Activated naive CD4-positive, alpha-beta T cell treated with anti-CD3 and anti-CD28 coated beads for 36 hours (primary cell): ENCODE measurements at regions of chr13 and their contacts with region 1.

Region 1: DNA sequence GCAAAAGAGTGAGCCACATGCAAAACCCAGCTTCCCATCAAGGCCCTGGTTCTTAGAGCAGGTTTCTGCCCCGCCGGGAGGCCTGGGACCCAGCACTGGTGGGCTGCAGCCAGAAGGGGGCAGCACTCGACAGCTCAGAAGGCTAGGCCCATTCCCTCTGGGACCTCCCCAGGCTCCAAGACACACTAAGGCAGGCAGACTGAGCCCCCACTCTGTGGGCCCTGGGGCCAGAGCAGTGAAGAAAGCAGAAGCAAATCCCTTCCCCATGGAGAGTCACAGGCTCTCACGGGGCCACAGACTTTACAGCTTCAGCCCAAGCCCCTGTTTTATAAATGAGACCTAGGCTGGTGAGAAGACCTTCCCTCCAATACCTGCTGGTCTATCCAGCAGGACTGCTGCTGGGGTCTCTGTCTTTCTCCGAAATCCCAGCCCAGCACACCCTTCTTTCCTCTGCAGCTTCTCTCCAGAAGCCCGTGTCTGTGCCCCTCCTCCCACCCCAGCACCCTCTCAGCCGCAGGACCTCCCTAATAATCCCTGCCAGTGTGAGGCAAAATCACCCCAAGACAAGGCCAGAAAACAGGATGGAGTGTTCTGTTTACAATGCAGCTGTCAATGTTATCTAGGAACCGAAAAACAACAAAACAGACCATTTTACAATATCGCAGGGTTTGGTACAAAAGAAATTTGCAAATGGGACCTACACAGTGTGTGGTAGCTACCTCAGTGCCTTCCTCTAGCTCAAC is 109.3 kb downstream of the ABCC4 start:
- DNase-seq: peak; percentile 82
- H3K4me3 Mint-ChIP-seq: no peak overlapping the region
- H3K27ac Mint-ChIP-seq: no peak overlapping the region
- H3K4me1 Mint-ChIP-seq: peaks cover 5% of the 10 kb centered on the region
- H3K27me3 Mint-ChIP-seq: no peaks in the 10 kb centered on the region

Region 2: DNA sequence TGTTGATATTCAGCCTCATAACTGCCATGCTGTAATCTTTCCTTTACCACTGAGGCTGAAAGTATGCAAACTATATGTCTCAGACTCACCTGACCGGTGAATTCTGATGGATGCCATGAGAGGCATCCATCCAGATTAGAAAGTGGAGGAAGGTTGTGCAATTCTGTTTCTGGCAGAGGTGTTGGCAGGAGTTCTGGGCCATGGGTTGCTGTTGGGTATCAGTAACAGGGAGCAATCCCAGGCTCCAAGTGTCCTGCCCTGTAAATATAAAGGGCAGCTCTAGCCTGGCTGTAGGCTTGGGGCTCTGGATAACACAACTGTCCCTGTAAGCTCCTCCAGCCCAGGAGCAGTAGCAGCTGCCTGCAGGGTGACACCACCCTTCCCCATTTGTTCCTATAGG is 186.6 kb after region 1 on chr13:
- CTCF ChIA-PET with region 1: interaction called, 146 read pairs
- intact Hi-C with region 1: loop called (anchors 1 kb)
- DNase-seq: no peak
- H3K4me3 Mint-ChIP-seq: no peak overlapping the region
- H3K27ac Mint-ChIP-seq: no peak overlapping the region
- H3K4me1 Mint-ChIP-seq: peaks cover 5% of the 10 kb centered on the region
- H3K27me3 Mint-ChIP-seq: no peaks in the 10 kb centered on the region

Region 3: DNA sequence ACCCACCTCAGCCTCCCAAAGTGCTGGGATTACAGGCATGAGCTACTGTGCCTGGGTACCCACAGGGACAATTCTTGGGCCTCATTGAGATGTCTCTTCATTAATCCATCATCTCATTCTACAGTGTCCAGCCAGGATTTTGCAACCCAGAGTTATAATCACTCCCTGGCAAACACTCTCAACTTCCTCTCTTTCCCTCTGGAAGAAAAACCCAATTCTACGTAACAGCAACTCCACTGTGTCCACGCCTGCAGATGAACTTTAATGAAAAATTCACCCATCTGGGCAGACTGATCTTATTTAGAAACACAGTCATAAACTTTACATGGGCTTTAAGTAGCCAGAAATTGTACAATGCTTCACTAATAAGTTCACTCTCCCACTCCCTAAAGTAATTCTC is 199.4 kb after region 1 on chr13:
- CTCF ChIA-PET with region 1: interaction called, 14 read pairs
- intact Hi-C with region 1: no loop called
- DNase-seq: no peak
- H3K4me3 Mint-ChIP-seq: no peak overlapping the region
- H3K27ac Mint-ChIP-seq: no peak overlapping the region
- H3K4me1 Mint-ChIP-seq: no peaks in the 10 kb centered on the region
- H3K27me3 Mint-ChIP-seq: peaks cover 13% of the 10 kb centered on the region

Region 4: DNA sequence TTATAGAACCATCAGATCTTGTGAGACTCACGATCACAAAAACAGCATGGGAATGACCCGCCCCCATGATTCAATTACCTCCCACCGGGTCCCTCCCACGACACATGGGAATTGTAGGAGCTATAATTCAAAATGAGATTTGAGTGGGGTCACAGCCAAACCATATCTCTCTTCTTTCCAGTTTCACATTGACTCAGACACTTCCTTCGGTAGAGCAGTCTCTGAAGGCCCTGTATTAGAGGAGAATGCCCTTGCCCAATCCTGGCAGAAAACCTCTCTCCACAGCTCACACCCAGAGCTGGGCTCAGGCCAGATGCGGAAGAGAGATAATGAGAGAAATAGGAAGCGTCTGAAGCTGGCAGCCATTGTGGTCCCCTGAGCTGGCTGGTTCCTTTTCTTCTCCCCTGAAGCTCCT is 288.1 kb after region 1 on chr13:
- CTCF ChIA-PET with region 1: interaction called, 19 read pairs
- intact Hi-C with region 1: loop called (anchors 1 kb)
- DNase-seq: peak; percentile 27
- H3K4me3 Mint-ChIP-seq: no peak overlapping the region
- H3K27ac Mint-ChIP-seq: no peak overlapping the region
- H3K4me1 Mint-ChIP-seq: peaks cover 10% of the 10 kb centered on the region
- H3K27me3 Mint-ChIP-seq: peaks cover 3% of the 10 kb centered on the region

Region 5: DNA sequence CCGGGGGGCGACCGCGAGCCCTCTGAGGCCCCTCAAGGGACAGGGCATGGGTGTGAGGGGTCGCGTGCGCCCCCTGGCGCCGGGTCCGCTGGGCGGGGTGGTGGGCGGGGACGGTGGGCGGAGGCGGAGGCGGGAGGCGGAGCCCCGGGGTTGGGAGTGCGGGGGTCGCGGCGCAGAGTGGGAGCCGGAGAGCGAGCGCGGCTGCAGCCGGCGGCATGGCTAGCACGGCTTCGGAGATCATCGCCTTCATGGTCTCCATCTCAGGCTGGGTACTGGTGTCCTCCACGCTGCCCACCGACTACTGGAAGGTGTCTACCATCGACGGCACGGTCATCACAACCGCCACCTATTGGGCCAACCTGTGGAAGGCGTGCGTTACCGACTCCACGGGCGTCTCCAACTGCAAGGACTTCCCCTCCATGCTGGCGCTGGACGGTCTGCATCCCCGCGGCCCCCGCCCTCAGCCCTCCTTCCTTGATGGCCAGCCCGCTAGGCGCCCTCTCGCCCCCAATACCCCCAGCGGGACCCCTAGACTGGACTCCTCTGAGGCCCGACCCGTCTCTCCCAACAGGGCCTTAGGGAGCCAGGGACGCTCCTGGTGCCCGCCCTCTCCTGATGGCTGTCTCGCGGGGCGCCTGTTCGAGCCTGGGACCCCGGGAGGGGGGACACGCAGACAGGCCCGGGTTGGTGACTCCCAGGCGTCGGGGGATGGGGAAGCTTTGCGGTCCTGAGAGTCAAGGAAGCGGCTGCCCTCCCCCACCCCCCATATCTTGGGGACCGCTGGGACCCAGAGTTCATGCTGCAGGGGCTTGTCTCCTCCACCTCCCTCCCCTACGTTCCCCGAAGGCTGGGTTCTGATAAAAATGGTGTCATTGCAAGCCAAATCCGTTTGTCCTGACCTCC is 360.8 kb after region 1 on chr13 and contains the start of gene CLDN10:
- CTCF ChIA-PET with region 1: no interaction called
- intact Hi-C with region 1: loop called (anchors 5 kb)
- DNase-seq: no peak
- H3K4me3 Mint-ChIP-seq: peak within 1 kb of the TSS; percentile 32
- H3K27ac Mint-ChIP-seq: no peak within 1 kb of the TSS
- H3K4me1 Mint-ChIP-seq: peaks cover 12% of the 10 kb centered on the region
- H3K27me3 Mint-ChIP-seq: peaks cover 61% of the 10 kb centered on the region
- total RNA-seq, gene CLDN10: not detected